ENCODE measurements at regions of chr7 and their contacts with region 1.

Region 1: GRCh38 chr7:20749896-20750295 is 36.8 kb downstream of the SP8 start:
- DNase-seq: no peak
- H3K4me3 ChIP-seq: no peak overlapping the region
- H3K27ac ChIP-seq: no peak overlapping the region
- H3K4me1 ChIP-seq: no peaks in the 10 kb centered on the region
- H3K27me3 ChIP-seq: no peaks in the 10 kb centered on the region
- CTCF ChIP-seq: no peak
- EP300 ChIP-seq: no peak
- POLR2A ChIP-seq: no peak

Region 2: GRCh38 chr7:20310963-20311742 is 438.7 kb before region 1 on chr7:
- intact Hi-C with region 1: no loop called
- DNase-seq: no peak
- H3K4me3 ChIP-seq: no peak overlapping the region
- H3K27ac ChIP-seq: no peak overlapping the region
- H3K4me1 ChIP-seq: peaks cover 2% of the 10 kb centered on the region
- H3K27me3 ChIP-seq: no peaks in the 10 kb centered on the region
- CTCF ChIP-seq: no peak
- EP300 ChIP-seq: no peak
- POLR2A ChIP-seq: no peak

Region 3: GRCh38 chr7:21317966-21318915 is 568.3 kb after region 1 on chr7:
- intact Hi-C with region 1: loop called in 1 of 4 experiments (anchors 10 kb)
- DNase-seq: no peak
- H3K4me3 ChIP-seq: no peak overlapping the region
- H3K27ac ChIP-seq: no peak overlapping the region
- H3K4me1 ChIP-seq: no peaks in the 10 kb centered on the region
- H3K27me3 ChIP-seq: no peaks in the 10 kb centered on the region
- CTCF ChIP-seq: no peak
- EP300 ChIP-seq: no peak
- POLR2A ChIP-seq: no peak